ENCODE measurements at regions of chr18 and their contacts with region 1.

Region 1: GRCh38 chr18:51559882-51560247 is 362.4 kb upstream of the MEX3C start:
- DNase-seq: no peak
- ATAC-seq: no peak
- H3K4me3 ChIP-seq: no peak overlapping the region
- H3K27ac ChIP-seq: no peak overlapping the region
- H3K4me1 ChIP-seq: no peaks in the 10 kb centered on the region
- H3K27me3 ChIP-seq: no peaks in the 10 kb centered on the region

Region 2: GRCh38 chr18:51727780-51728179 is 167.9 kb after region 1 on chr18:
- intact Hi-C with region 1: loop called in 1 of 4 experiments (anchors 10 kb)
- DNase-seq: no peak
- ATAC-seq: no peak
- H3K4me3 ChIP-seq: no peak overlapping the region
- H3K27ac ChIP-seq: no peak overlapping the region
- H3K4me1 ChIP-seq: no peaks in the 10 kb centered on the region
- H3K27me3 ChIP-seq: no peaks in the 10 kb centered on the region

Measured in right cardiac atrium (tissue), 5 donors.